ENCODE measurements at regions of chr3 and their contacts with region 1.

Region 1: GRCh38 chr3:49906004-49906743 is 2.5 kb upstream of the MST1R start:
- DNase-seq: peak; percentile 55 to 82
- ATAC-seq: peak; percentile 63 to 74; a peak in 5 of 6 replicates
- H3K4me3 ChIP-seq: peak overlapping the region; percentile 24; the same call in 1 of the 3 replicates
- H3K27ac ChIP-seq: peak overlapping the region; percentile 51 to 84
- H3K4me1 ChIP-seq: peaks cover 42% of the 10 kb centered on the region
- CTCF ChIP-seq: peak; percentile 74
- EP300 ChIP-seq: no peak
- POLR2A ChIP-seq: no peak
- RAD21 ChIP-seq: peak; percentile 81 to 83

Region 2: DNA sequence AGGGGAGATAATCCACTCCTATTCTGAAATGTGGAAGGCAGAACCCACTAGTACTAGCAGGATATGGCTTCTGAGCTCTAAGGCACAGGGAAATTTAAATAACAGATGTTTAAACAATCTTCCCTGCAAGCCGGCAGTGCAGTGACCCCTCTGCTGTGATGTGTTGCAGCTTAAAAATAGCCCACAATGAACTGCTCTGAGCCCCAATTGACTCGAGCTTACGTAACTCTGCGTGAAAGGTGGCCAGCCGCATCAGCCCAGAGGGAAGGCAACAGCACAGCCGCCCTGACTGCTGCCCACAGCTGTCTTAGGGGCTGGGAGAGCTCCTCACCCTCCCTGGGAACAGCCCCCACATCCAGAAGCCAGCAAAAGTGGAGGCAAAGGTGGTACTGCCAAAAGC is 24.0 kb before region 1 on chr3:
- CTCF ChIA-PET with region 1: interaction called, 11 read pairs
- POLR2A ChIA-PET with region 1: no interaction called
- DNase-seq: no peak
- ATAC-seq: no peak
- H3K4me3 ChIP-seq: no peak overlapping the region
- H3K27ac ChIP-seq: no peak overlapping the region
- H3K4me1 ChIP-seq: no peaks in the 10 kb centered on the region
- CTCF ChIP-seq: no peak
- EP300 ChIP-seq: no peak
- POLR2A ChIP-seq: no peak
- RAD21 ChIP-seq: no peak

Measured in A549 (cell line).